ENCODE measurements at regions of chr22 and their contacts with region 1.

Region 1: GRCh38 chr22:49979587-49980264 is 19.2 kb downstream of the PIM3 start:
- DNase-seq: no peak
- ATAC-seq: no peak
- H3K4me3 Mint-ChIP-seq: no peak overlapping the region
- H3K27ac Mint-ChIP-seq: peak overlapping the region; percentile 14
- H3K4me1 Mint-ChIP-seq: peaks cover 33% of the 10 kb centered on the region
- H3K27me3 Mint-ChIP-seq: peaks cover 2% of the 10 kb centered on the region
- CTCF ChIP-seq: no peak

Region 2: DNA sequence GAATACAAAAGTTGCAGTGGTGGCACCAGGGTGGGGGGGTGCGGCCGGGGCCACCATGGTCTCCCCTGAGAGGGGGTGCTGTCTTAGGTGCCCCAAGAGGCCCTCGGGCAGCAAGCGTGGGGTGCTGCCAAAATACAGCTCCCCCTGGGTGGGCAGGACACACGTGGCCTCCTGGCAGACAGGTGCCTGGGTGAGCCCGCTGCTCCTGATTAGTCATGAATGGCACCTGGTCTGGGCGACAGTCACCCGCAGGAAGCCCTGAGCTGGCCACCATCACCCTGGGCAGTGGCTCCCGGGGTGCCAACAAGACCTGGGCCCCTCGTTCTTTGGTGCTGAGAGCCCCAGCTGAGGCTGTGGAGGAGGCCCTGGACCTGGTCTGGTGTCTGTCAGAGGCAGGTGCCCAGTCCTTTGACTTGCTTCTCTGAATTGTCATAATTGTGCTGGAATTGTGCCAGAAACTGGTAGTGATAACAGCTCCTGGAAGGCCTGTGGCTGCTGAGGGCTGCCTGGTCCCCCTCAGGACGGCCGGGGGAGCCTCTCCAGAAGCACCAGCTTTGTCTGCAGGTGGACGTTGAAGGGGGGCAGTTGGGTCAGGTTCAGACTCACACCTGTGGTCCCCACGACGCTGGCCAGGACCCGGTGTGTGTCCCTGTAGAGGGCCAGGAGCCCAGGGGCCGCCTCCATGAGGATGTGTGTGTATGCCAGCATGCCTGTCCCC is 76.2 kb before region 1 on chr22:
- CTCF ChIA-PET with region 1: no interaction called
- POLR2A ChIA-PET with region 1: no interaction called
- intact Hi-C with region 1: no loop called
- DNase-seq: no peak
- ATAC-seq: no peak
- H3K4me3 Mint-ChIP-seq: no peak overlapping the region
- H3K27ac Mint-ChIP-seq: no peak overlapping the region
- H3K4me1 Mint-ChIP-seq: no peaks in the 10 kb centered on the region
- H3K27me3 Mint-ChIP-seq: no peaks in the 10 kb centered on the region
- CTCF ChIP-seq: no peak

Region 3: DNA sequence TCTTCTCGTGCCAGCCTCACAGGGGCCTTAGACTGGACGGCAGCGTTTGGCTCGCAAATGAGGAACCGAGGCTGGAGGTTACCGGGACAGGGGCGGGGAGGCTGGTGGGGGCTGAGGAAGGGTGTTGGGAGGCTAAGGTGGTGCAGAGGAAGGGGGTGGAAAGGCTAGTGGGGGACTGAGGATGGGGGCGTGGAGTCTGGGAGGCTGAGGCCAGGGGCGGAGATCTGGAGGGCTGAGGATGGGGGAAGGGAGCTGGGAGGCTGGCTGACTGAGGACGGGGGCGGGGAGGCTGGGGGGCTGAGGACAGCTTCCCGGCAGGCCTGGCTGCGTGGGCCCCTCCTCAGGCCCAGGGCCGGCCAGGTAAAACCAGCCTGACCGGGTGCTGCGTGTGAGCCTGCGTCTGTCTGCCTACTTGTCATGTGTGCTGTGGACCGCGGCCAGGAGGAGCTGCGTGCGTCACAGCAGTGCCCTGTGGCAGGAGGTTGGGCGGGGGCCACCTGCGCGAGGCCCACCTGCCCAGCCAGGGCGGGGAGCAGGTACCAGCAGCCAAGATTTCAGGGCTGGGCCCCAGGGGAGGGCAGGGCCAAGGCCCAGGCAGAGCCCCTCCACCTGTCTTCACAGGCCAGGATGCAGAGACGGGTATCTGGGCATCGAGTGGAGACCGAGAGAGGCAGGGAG is 28.6 kb before region 1 on chr22:
- CTCF ChIA-PET with region 1: no interaction called
- POLR2A ChIA-PET with region 1: no interaction called
- intact Hi-C with region 1: no loop called
- DNase-seq: no peak
- ATAC-seq: peak; percentile 79
- H3K4me3 Mint-ChIP-seq: no peak overlapping the region
- H3K27ac Mint-ChIP-seq: no peak overlapping the region
- H3K4me1 Mint-ChIP-seq: peaks cover 2% of the 10 kb centered on the region
- H3K27me3 Mint-ChIP-seq: no peaks in the 10 kb centered on the region
- CTCF ChIP-seq: no peak

Region 4: GRCh38 chr22:49992921-49993648 is 13.4 kb after region 1 on chr22:
- CTCF ChIA-PET with region 1: interaction called, 20 read pairs
- POLR2A ChIA-PET with region 1: interaction called, 6 read pairs
- intact Hi-C with region 1: loop called (anchors 2 kb)
- DNase-seq: peak; percentile 61
- ATAC-seq: peak; percentile 98
- H3K4me3 Mint-ChIP-seq: peak overlapping the region; percentile 41
- H3K27ac Mint-ChIP-seq: peak overlapping the region; percentile 54
- H3K4me1 Mint-ChIP-seq: peaks cover 13% of the 10 kb centered on the region
- H3K27me3 Mint-ChIP-seq: no peaks in the 10 kb centered on the region
- CTCF ChIP-seq: no peak